GM10248 (cell line): ENCODE measurements at regions of chr4 and their contacts with region 1.

Region 1: GRCh38 chr4:145920205-145920604 is 18.4 kb downstream of the ZNF827 start:
- DNase-seq: no peak
- CTCF ChIP-seq: no peak

Region 2: DNA sequence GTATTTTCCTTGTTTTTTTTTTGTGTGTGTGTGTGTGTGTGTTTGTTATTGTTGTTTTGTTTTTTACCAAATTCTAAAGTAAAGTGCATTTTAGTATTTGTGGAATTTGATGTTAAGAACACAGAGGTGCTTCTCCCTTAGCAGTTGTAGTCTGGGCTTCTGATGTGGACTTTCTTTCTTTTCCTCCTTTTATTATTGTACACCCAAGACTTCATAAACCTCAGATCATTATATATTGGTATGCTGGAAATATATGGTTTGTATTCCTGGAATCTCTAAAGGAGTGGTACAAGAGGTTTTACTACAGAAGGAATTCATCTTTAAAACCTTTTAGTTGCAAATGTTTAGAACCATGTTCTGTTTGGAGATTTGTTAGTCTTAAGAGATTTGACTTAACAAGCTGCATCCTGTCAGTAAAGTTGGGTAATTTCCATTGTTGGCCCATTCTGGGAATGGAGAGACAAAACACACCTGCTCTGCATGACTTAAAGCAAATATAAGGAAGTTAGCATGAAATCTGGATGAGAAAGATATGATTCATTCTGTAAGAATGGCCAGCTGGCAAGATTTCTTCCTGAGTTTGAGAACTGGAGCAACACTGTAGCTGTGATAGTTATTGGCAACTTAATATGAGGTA is 374.5 kb before region 1 on chr4:
- CTCF ChIA-PET with region 1: no interaction called
- POLR2A ChIA-PET with region 1: no interaction called
- DNase-seq: no peak
- CTCF ChIP-seq: no peak

Region 3: GRCh38 chr4:145930592-145930991 is 10.4 kb after region 1 on chr4:
- CTCF ChIA-PET with region 1: interaction called, 24 read pairs
- POLR2A ChIA-PET with region 1: no interaction called
- DNase-seq: no peak
- CTCF ChIP-seq: no peak